Endothelial cell of umbilical vein (primary cell): ENCODE measurements at regions of chr11 and their contacts with region 1.

Region 1: GRCh38 chr11:112163875-112164685 is at the start of gene IL18:
- DNase-seq: no peak
- H3K4me3 ChIP-seq: peak within 1 kb of the TSS in 1 of 3 experiments; percentile 20
- H3K27ac ChIP-seq: peak within 1 kb of the TSS; percentile 19
- H3K4me1 ChIP-seq: peaks cover 11% of the 10 kb centered on the region
- H3K27me3 ChIP-seq: no peaks in the 10 kb centered on the region
- CTCF ChIP-seq: no peak
- POLR2A ChIP-seq: no peak
- total RNA-seq, gene IL18: 1.5 and 1.6 TPM in 2 replicates

Region 2: GRCh38 chr11:112121981-112122615 is 42.0 kb before region 1 on chr11:
- CTCF ChIA-PET with region 1: interaction called, 3 read pairs
- POLR2A ChIA-PET with region 1: interaction called, 4 read pairs
- dilution Hi-C with region 1: no loop called
- intact Hi-C with region 1: loop called (anchors 2 kb)
- DNase-seq: no peak
- H3K4me3 ChIP-seq: no peak overlapping the region
- H3K27ac ChIP-seq: no peak overlapping the region
- H3K4me1 ChIP-seq: peaks cover 22% of the 10 kb centered on the region
- H3K27me3 ChIP-seq: no peaks in the 10 kb centered on the region
- CTCF ChIP-seq: no peak
- POLR2A ChIP-seq: no peak